Prostate gland (tissue), 2 donors: ENCODE measurements at regions of chr4 and their contacts with region 1.

Region 1: DNA sequence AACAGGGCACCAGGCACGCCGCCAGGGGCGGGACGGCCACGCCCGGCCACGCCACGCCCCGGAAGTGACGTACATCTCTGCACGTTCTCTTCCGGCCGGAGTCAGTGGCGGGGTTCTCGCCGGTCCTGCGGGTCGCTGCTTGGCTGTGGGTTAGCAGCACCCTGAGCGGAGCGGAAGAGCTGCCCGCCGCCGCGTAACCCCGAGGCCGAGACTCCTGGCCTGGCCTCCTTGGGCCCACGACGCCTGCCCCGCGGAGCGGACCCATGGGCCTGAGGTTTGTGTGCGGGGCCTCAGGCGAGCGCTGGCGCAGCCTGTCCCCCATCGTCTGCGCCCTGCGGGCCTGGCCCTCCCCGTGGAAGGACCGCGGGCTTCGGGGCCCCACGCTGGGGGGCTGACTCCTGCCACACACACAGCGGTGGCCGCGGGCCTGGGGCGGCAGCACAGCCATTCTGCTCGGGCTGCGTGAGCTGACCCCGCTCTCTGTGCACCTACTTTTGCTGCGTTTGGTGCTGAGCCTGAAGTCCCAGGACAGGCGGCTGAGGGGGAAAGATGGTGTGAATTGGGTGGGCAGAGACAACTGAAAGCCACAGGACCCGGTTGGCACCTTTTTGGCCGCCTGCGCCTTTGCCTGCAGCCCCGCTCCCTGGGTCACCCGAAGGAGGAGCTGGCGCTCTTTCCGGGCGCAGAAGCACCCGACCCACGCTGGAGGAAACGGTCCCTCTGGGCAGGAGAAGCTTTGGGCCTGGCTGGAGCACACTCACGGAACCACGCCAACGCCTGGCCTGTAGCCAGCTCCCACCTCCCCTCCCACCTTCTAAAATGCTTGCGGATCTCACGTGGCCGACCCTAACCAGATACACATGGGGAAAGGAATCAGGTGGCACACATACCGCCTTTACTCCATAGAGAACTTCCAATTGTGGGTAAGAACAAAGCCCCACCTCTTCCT is 28.1 kb downstream of the NOP14 start:
- DNase-seq: peak; percentile 94
- H3K4me3 ChIP-seq: peak overlapping the region; percentile 95 to 99
- H3K27ac ChIP-seq: peak overlapping the region; percentile 90 to 91
- H3K4me1 ChIP-seq: peaks cover 28% of the 10 kb centered on the region
- H3K27me3 ChIP-seq: no peaks in the 10 kb centered on the region
- CTCF ChIP-seq: peak in 2 of 4 experiments; percentile 35 to 61
- POLR2A ChIP-seq: peak; percentile 99

Region 2: GRCh38 chr4:2262143-2262943 is 672.7 kb before region 1 on chr4:
- intact Hi-C with region 1: loop called (anchors 10 kb)
- DNase-seq: peak; percentile 100
- H3K4me3 ChIP-seq: peak overlapping the region; percentile 61 to 88
- H3K27ac ChIP-seq: peak overlapping the region; percentile 91 to 93
- H3K4me1 ChIP-seq: peaks cover 33% of the 10 kb centered on the region
- H3K27me3 ChIP-seq: no peaks in the 10 kb centered on the region
- CTCF ChIP-seq: peak in 2 of 4 experiments; percentile 23 to 45
- POLR2A ChIP-seq: peak; percentile 87

Region 3: GRCh38 chr4:2767705-2768074 is 167.4 kb before region 1 on chr4:
- intact Hi-C with region 1: loop called (anchors 5 kb)
- DNase-seq: no peak
- H3K4me3 ChIP-seq: no peak overlapping the region
- H3K27ac ChIP-seq: no peak overlapping the region
- H3K4me1 ChIP-seq: no peaks in the 10 kb centered on the region
- H3K27me3 ChIP-seq: no peaks in the 10 kb centered on the region
- CTCF ChIP-seq: no peak
- POLR2A ChIP-seq: no peak

Region 4: GRCh38 chr4:2843263-2843940 is 91.7 kb before region 1 on chr4 and contains the start of gene ADD1:
- intact Hi-C with region 1: loop called (anchors 5 kb)
- DNase-seq: peak; percentile 90
- H3K4me3 ChIP-seq: peak within 1 kb of the TSS; percentile 69 to 96
- H3K27ac ChIP-seq: peak within 1 kb of the TSS; percentile 92 to 95
- H3K4me1 ChIP-seq: peaks cover 2% of the 10 kb centered on the region
- H3K27me3 ChIP-seq: no peaks in the 10 kb centered on the region
- CTCF ChIP-seq: no peak
- POLR2A ChIP-seq: peak; percentile 75
- total RNA-seq, gene ADD1: 164 to 321 TPM

Region 5: DNA sequence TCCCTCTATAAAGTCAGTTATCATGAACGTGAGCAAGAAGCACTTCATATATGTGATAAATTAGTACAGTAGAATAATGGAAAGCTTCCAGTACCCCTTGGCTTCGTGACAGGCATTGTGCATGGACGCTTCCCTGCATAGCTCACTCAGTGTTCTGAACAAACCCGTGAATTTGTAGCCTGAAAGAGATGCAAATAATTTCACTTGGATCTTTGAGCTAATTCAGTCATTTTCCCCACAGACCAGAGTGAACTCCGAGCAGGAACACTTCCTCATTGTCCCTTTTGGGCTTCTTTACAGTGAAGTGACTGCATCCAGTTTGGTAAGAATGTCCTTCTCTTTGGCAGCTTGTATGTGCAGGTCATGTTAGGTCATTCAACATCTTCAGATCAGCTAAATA is 41.3 kb before region 1 on chr4:
- intact Hi-C with region 1: loop called (anchors 2 kb)
- DNase-seq: no peak
- H3K4me3 ChIP-seq: no peak overlapping the region
- H3K27ac ChIP-seq: no peak overlapping the region
- H3K4me1 ChIP-seq: no peaks in the 10 kb centered on the region
- H3K27me3 ChIP-seq: no peaks in the 10 kb centered on the region
- CTCF ChIP-seq: no peak
- POLR2A ChIP-seq: no peak

Region 6: GRCh38 chr4:3233391-3234071 is 298.4 kb after region 1 on chr4:
- intact Hi-C with region 1: no loop called
- DNase-seq: no peak
- H3K4me3 ChIP-seq: no peak overlapping the region
- H3K27ac ChIP-seq: no peak overlapping the region
- H3K4me1 ChIP-seq: no peaks in the 10 kb centered on the region
- H3K27me3 ChIP-seq: no peaks in the 10 kb centered on the region
- CTCF ChIP-seq: no peak
- POLR2A ChIP-seq: no peak